ENCODE measurements at regions of chrX and their contacts with region 1.

Region 1: GRCh38 chrX:114959729-114960128 is 57.7 kb downstream of the IL13RA2 start:
- DNase-seq: no peak

Region 2: DNA sequence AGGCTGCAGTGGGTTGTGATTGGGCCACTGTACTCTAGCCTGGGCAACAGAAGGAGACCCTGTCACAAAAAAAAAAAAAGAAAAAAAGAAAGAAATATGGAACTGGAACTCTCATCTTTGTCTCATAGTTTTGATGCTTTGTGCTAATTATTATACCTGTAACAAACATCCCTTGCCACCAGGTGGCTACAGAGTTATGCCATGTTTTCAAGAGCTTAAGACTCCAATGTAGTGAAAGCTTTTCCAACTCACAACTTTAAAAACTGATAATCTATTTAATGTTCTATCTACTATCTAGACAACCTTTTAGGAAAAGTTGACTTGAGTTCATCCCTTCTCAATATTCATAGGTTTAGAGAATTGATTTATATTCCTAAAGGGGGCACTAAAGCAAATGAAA is 333.4 kb before region 1 on chrX:
- intact Hi-C with region 1: loop called (anchors 5 kb)
- DNase-seq: no peak

Region 3: DNA sequence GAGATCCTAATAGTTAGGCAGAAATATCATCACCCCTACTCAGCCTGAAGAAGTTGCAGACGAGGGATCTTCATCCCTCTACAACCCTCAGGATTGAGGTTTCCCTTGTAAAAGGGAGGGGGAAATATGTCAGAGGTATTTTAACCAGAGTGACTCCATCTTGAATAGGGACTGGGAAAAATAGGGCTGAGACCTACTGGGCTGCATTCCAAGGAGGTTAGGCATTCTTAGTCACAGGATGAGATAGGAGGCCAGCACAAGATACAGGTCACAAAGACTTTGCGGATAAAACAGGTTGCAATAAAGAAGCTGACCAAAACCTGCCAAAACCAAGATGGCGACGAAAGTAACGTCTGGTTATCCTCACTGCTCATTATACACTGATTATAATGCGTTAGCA is 40.2 kb after region 1 on chrX:
- intact Hi-C with region 1: no loop called
- DNase-seq: no peak

Region 4: DNA sequence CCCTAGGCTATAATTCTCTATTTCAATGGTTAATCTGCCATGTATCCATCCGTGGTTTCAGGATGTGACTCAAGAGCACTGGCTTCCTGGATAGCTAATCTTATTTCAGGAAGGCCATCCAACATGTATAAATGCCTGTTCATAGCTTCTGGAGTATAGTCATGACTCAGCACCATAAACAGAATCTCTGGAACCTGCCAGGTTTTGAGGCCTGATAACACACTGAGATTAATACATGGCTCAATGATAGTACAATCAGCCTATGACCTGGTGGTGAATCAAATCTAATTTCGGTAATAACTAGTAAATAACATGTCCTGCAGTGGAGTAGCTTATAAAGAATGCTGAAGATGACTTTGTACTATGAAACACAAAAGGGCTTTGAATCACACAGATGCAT is 63.4 kb after region 1 on chrX:
- intact Hi-C with region 1: no loop called
- DNase-seq: no peak

Region 5: GRCh38 chrX:115134382-115134781 is 174.7 kb after region 1 on chrX:
- intact Hi-C with region 1: no loop called
- DNase-seq: no peak

Region 6: DNA sequence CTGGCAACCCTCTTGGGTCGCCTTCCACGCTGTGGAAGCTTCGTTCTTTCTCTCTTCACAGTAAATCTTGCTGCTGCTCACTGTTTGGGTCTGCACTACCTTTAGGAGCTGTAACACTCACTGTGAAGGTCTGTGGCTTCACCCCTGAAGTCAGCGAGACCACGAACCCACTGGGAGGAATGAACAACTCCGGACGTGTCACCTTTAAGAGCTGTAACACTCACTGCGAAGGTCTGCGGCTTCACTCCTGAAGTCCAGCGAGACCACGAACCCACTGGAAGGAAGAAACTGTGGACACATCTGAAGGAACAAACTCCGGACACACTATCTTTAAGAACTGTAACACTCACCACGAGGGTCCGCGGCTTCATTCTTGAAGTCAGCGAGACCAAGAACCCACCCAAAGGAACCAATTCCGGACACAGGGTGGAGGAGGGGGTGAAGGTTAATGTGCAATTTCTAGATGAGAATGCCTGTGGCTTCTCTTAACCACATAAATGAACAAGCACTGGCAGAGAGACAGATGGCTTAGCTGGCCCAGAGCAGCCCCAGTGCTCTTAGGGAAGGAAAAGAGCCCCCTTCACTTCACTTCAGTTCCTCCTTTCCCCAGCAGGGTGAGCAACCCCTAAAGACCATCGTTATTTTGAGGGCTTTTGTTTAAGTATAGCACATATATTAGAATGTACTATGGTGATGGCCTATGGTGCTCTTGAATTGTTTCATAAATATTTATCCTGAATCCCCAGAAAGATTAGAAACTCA is 402.8 kb after region 1 on chrX:
- intact Hi-C with region 1: no loop called
- DNase-seq: no peak

Measured in cardiac septum (tissue), 1 donor.